Cardiac septum (tissue), 1 donor: ENCODE measurements at regions of chr5 and their contacts with region 1.

Region 1: GRCh38 chr5:33997331-33997983 is 10.4 kb downstream of the AMACR start:
- DNase-seq: no peak

Region 2: GRCh38 chr5:34459908-34460307 is 462.5 kb after region 1 on chr5:
- intact Hi-C with region 1: loop called (anchors 10 kb)
- DNase-seq: no peak